ENCODE measurements at regions of chr11 and their contacts with region 1.

Region 1: DNA sequence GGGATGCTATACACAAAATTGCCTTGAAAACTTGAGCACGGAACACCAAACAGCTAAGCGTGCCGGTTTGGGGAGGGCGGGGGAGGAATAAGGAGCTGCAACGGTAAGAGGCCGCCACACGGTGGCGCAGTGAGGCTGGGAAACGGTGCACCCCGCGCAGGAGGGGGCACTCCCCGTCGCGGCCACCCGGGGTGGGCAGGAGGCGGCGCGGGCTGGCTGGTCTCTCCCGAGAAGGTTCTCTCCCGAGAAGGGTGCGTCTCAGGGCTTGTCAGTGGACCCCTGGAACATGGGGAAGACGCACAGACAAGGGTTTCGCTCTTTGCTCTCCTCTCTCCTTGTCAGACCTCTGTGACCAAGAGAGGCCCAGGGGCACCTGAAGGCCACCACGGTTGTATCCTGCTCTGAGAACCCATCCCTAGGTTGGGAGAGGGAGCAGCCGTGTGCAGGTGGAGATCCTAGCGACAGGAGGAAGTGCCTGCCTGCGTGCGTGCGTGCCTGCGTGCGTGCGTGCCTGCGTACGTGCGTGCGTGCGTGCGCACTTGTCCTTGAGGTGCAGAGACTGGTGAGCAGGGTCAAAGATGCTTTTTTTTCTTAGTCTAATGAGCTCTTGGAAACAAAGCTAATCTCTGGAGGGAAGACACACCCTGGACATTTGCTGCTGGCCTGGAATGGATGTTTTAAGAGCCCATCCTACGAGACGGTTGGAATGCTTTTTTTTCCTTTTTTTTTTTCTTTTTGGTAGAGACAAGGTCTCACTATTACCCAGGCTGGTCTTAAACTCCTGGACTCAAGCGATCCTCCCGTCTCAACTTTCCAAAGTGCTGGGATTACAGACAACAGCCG is 18.1 kb upstream of the JAM3 start:
- DNase-seq: peak; percentile 47 to 86 (median 77)
- ATAC-seq: peak; percentile 99
- H3K4me3 ChIP-seq: no peak overlapping the region
- H3K4me3 Mint-ChIP-seq: no peak overlapping the region
- H3K27ac ChIP-seq: no peak overlapping the region
- H3K27ac Mint-ChIP-seq: no peak overlapping the region
- H3K4me1 ChIP-seq: peaks cover 9% of the 10 kb centered on the region
- H3K4me1 Mint-ChIP-seq: peaks cover 5% of the 10 kb centered on the region
- H3K27me3 ChIP-seq: peaks cover 0 to 6% of the 10 kb centered on the region in 2 experiments
- H3K27me3 Mint-ChIP-seq: peaks cover 13% of the 10 kb centered on the region
- CTCF ChIP-seq: peak; percentile 91

Region 2: GRCh38 chr11:132744771-132745170 is 1306.0 kb before region 1 on chr11:
- CTCF ChIA-PET with region 1: no interaction called
- POLR2A ChIA-PET with region 1: no interaction called
- intact Hi-C with region 1: no loop called
- DNase-seq: no peak
- ATAC-seq: no peak
- H3K4me3 ChIP-seq: no peak overlapping the region
- H3K4me3 Mint-ChIP-seq: no peak overlapping the region
- H3K27ac ChIP-seq: no peak overlapping the region
- H3K27ac Mint-ChIP-seq: no peak overlapping the region
- H3K4me1 ChIP-seq: no peaks in the 10 kb centered on the region
- H3K4me1 Mint-ChIP-seq: no peaks in the 10 kb centered on the region
- H3K27me3 ChIP-seq: no peaks in the 10 kb centered on the region
- H3K27me3 Mint-ChIP-seq: no peaks in the 10 kb centered on the region
- CTCF ChIP-seq: no peak

Region 3: DNA sequence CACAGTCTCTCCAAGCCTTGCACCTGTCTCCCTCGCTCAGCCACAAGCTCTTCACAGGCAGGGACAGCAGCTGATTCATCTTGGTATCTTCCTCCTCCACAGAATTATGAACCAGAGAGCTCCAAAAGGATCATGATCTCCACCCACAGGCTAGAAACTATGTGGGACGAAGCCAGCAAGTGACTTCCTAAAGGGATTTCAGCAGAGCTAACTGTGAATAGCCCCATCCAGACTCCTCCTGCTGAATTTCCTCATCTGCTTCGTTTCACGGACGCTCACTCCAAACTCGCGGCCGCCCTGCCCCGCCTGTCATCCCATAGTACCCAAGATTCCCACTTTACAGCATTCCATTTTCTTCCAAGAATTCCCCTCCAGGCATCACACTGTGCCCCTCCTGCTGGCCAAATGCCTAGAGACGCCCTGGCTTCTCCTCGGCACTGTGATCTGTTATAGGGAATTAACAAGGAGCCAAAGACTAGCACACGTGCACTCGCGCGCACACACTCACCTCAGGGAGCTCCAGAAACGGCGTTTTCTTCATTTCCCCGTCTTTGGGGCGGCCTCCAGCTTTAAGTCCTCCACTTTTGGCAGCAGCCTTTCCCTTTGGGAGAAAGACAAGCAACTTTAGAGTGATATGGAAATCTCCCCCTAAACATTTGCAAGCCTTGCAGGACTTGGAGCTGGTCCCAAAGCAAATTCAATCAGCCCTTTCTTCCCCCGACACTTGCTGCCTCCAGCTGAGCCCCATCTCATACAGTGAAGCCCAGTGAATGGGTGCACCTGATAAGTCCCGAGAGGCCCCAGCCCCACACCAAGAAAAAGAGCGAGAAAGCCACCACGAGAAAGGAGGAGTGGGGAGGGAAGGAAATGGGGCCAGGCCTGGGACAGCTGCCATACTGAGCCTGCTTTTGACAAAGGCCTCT is 240.9 kb before region 1 on chr11:
- CTCF ChIA-PET with region 1: no interaction called
- POLR2A ChIA-PET with region 1: no interaction called
- intact Hi-C with region 1: no loop called
- DNase-seq: no peak
- ATAC-seq: no peak
- H3K4me3 ChIP-seq: no peak overlapping the region
- H3K4me3 Mint-ChIP-seq: no peak overlapping the region
- H3K27ac ChIP-seq: no peak overlapping the region
- H3K27ac Mint-ChIP-seq: no peak overlapping the region
- H3K4me1 ChIP-seq: no peaks in the 10 kb centered on the region
- H3K4me1 Mint-ChIP-seq: no peaks in the 10 kb centered on the region
- H3K27me3 ChIP-seq: peaks cover 0 to 3% of the 10 kb centered on the region in 2 experiments
- H3K27me3 Mint-ChIP-seq: peaks cover 10% of the 10 kb centered on the region
- CTCF ChIP-seq: no peak

Region 4: GRCh38 chr11:133927690-133928627 is 122.8 kb before region 1 on chr11:
- CTCF ChIA-PET with region 1: interaction called, 31 read pairs
- POLR2A ChIA-PET with region 1: interaction called, 3 read pairs
- intact Hi-C with region 1: loop called (anchors 1 kb)
- DNase-seq: peak; percentile 39 to 81 (median 68)
- ATAC-seq: peak; percentile 90
- H3K4me3 ChIP-seq: peak overlapping the region; percentile 36 to 51
- H3K4me3 Mint-ChIP-seq: peak overlapping the region; percentile 82
- H3K27ac ChIP-seq: peak overlapping the region in 1 of 2 experiments; percentile 9
- H3K27ac Mint-ChIP-seq: peak overlapping the region; percentile 82
- H3K4me1 ChIP-seq: peaks cover 18% of the 10 kb centered on the region
- H3K4me1 Mint-ChIP-seq: peaks cover 17% of the 10 kb centered on the region
- H3K27me3 ChIP-seq: no peaks in the 10 kb centered on the region
- H3K27me3 Mint-ChIP-seq: no peaks in the 10 kb centered on the region
- CTCF ChIP-seq: peak; percentile 78

Region 5: GRCh38 chr11:133966921-133967598 is 83.7 kb before region 1 on chr11:
- CTCF ChIA-PET with region 1: interaction called, 7 read pairs
- POLR2A ChIA-PET with region 1: no interaction called
- intact Hi-C with region 1: loop called (anchors 1 kb)
- DNase-seq: peak; percentile 47 to 87 (median 74)
- ATAC-seq: peak; percentile 93
- H3K4me3 ChIP-seq: peak overlapping the region; percentile 42 to 55
- H3K4me3 Mint-ChIP-seq: peak overlapping the region; percentile 89
- H3K27ac ChIP-seq: peak overlapping the region in 1 of 2 experiments; percentile 50
- H3K27ac Mint-ChIP-seq: peak overlapping the region; percentile 87
- H3K4me1 ChIP-seq: peaks cover 15% of the 10 kb centered on the region
- H3K4me1 Mint-ChIP-seq: peaks cover 13% of the 10 kb centered on the region
- H3K27me3 ChIP-seq: no peaks in the 10 kb centered on the region
- H3K27me3 Mint-ChIP-seq: no peaks in the 10 kb centered on the region
- CTCF ChIP-seq: peak; percentile 65

Region 6: DNA sequence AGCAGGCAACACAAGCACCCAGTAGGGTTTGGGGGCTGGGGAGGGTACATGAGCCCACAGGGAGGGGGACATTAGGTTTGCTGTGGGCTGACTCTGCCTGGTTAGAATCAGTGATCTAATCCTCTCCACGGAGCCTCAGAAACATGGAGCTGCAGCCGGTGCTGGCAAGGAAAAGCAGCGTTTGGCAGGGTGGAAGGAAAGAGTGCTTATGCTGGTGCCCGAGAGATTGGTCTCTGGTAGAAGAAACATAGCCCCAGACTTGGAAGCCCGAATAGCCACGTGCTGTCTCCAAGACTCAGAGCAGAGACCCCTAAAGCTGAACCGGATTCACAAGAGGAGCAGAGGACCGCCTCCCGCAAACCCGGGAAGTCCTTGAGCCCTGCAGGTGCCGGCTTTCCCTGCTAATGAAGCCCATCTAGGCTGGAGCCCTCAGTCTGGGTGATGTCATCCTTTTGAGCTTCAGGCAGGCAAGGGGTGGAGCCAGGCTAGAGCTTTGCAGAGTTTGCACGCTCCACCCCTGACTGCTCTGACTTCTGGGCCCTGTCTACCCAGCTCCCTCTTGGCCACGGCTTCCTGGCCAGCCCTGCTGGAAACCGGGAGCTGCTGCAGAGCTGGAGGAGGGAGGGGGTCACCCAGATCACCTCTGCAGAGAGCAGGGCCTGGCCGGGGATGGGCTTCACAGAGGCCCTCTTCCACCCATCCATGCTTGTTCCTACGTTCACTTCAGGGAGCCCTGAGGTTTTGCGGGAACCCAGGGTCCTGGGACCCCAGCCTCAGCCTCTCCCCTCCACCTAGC is 16.9 kb before region 1 on chr11:
- CTCF ChIA-PET with region 1: interaction called, 29 read pairs
- POLR2A ChIA-PET with region 1: interaction called, 4 read pairs
- intact Hi-C with region 1: no loop called
- DNase-seq: peak; percentile 31 to 86 (median 74)
- ATAC-seq: peak; percentile 84
- H3K4me3 ChIP-seq: peak overlapping the region; percentile 26 to 55
- H3K4me3 Mint-ChIP-seq: peak overlapping the region; percentile 76
- H3K27ac ChIP-seq: peak overlapping the region; percentile 57 to 65
- H3K27ac Mint-ChIP-seq: peak overlapping the region; percentile 92
- H3K4me1 ChIP-seq: peaks cover 72% of the 10 kb centered on the region
- H3K4me1 Mint-ChIP-seq: peaks cover 75% of the 10 kb centered on the region
- H3K27me3 ChIP-seq: no peaks in the 10 kb centered on the region
- H3K27me3 Mint-ChIP-seq: no peaks in the 10 kb centered on the region
- CTCF ChIP-seq: no peak

Region 7: DNA sequence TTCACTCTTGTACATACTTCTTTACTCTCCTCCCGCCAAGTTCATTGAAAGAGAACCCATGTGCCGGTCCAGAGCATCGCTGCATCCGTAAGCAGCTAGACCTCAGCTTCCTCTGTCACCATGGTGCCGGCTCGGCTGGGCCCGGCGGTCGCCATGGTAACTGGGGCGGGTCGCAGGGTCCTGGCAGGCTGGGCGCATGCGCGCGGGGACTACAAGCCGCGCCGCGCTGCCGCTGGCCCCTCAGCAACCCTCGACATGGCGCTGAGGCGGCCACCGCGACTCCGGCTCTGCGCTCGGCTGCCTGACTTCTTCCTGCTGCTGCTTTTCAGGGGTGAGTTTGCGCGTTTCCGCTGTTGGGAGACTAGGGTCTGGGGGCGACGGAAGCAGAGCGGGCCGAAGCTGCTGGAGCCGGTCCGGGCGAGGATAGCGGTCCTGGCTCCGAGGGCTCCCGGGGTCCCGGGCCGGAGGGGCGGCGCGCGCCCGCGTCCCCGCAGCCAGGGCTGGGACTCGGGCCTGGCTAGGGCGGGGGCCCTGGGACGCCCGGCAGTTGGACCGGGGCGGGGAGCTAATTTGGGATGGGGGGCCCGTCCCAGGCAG is 18.2 kb after region 1 on chr11 and contains the start of gene JAM3:
- CTCF ChIA-PET with region 1: interaction called, 6 read pairs
- POLR2A ChIA-PET with region 1: no interaction called
- intact Hi-C with region 1: loop called (anchors 1 kb)
- DNase-seq: peak; percentile 95 to 99 (median 98)
- ATAC-seq: peak; percentile 91
- H3K4me3 ChIP-seq: peak within 1 kb of the TSS; percentile 52 to 58
- H3K4me3 Mint-ChIP-seq: peak within 1 kb of the TSS; percentile 94
- H3K27ac ChIP-seq: peak within 1 kb of the TSS in 1 of 2 experiments; percentile 50
- H3K27ac Mint-ChIP-seq: peak within 1 kb of the TSS; percentile 87
- H3K4me1 ChIP-seq: peaks cover 6% of the 10 kb centered on the region
- H3K4me1 Mint-ChIP-seq: peaks cover 17% of the 10 kb centered on the region
- H3K27me3 ChIP-seq: no peaks in the 10 kb centered on the region
- H3K27me3 Mint-ChIP-seq: peaks cover 1% of the 10 kb centered on the region
- CTCF ChIP-seq: no peak
- total RNA-seq, gene JAM3: 12.1 to 15.2 TPM

Region 8: GRCh38 chr11:134139873-134140331 is 89.1 kb after region 1 on chr11:
- CTCF ChIA-PET with region 1: interaction called, 23 read pairs
- POLR2A ChIA-PET with region 1: no interaction called
- intact Hi-C with region 1: loop called in 1 of 2 experiments (anchors 1 kb)
- DNase-seq: peak; percentile 22 to 74 (median 45)
- ATAC-seq: peak; percentile 73
- H3K4me3 ChIP-seq: no peak overlapping the region
- H3K4me3 Mint-ChIP-seq: no peak overlapping the region
- H3K27ac ChIP-seq: no peak overlapping the region
- H3K27ac Mint-ChIP-seq: no peak overlapping the region
- H3K4me1 ChIP-seq: no peaks in the 10 kb centered on the region
- H3K4me1 Mint-ChIP-seq: no peaks in the 10 kb centered on the region
- H3K27me3 ChIP-seq: no peaks in the 10 kb centered on the region
- H3K27me3 Mint-ChIP-seq: no peaks in the 10 kb centered on the region
- CTCF ChIP-seq: peak; percentile 63